ENCODE measurements at regions of chr4 and their contacts with region 1.

Region 1: DNA sequence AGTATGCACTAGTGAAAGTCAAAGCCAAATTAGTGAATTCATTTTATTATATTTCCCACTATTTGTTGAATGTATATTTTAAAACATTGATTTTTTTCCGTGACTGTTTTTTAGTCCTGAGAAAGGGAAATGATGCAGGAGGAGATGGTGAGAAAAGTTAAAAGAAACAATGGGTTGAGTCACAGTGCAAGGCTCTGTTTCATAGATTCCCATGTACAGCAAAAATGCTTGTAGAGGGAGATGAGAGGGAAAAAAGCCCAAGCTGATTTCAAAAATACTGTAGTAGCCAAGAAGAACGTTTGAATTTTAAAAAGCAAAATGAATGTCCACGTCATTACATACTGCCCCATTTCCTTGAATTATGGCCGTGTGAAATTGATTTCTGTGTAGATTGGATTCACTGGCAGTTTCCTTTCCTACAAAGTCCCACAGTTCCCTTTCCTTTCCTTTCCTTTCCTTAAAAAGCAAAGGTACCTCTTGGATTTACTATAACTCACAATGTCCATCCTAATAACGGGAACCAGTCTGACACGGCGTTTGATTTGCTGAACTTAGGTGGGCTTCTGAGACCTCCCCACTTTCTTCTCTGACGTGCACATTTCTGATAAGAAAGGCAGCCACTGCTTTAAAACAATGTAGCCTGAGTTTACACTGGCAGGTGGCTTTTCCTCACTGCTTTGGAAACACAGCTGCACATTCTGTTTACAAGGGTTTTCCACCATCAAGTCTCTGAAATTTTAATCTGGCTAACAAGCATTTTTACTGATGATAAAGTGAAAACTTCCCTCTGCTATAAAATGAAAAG is 63.7 kb downstream of the SPCS3 start:
- DNase-seq: no peak
- H3K4me3 ChIP-seq: peak overlapping the region; percentile 42
- H3K27ac ChIP-seq: peak overlapping the region; percentile 74
- H3K4me1 ChIP-seq: peaks cover 4% of the 10 kb centered on the region
- H3K27me3 ChIP-seq: no peaks in the 10 kb centered on the region
- CTCF ChIP-seq: no peak

Region 2: DNA sequence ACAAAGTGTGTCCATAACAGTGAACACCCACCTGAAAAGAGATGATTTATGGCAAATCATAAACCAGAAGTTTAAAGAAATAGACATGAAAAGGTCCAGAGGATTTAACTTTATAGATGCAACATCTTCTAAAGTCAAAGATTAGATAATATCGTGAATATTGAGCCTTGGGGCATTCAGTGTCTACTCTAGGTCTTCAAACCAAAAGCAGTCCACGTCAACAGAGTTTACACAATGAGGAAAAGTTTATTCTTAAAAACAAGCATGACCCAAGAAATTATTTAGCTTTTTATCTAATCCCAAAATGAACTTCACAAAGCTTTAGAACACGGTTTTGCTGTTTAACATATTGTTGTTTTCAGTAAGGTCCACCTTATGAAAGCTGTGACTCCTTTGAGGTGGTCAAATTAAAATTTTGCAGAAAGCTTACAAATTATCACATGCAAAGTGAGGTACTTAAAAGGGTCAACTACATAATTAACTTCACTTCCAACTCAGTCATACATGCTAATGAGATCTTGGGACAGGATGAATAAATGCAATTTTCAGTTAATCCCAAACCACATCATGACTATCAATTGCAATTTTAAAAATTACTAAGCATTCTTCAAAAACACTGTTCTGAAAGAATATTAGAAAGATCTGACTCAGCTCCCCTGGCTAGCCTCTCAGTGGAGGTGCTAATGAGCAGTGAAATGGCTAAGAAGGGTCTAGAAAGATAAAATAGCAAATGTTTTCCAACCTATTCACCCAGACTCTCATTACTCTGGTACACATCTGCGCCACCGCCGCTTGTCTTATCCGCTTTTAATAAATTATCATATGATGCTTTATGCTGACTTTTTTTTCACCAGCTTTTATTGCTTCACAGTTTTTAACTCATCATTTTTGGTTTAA is 410.2 kb before region 1 on chr4:
- intact Hi-C with region 1: no loop called
- DNase-seq: no peak
- H3K4me3 ChIP-seq: no peak overlapping the region
- H3K27ac ChIP-seq: no peak overlapping the region
- H3K4me1 ChIP-seq: no peaks in the 10 kb centered on the region
- H3K27me3 ChIP-seq: no peaks in the 10 kb centered on the region
- CTCF ChIP-seq: no peak

Region 3: DNA sequence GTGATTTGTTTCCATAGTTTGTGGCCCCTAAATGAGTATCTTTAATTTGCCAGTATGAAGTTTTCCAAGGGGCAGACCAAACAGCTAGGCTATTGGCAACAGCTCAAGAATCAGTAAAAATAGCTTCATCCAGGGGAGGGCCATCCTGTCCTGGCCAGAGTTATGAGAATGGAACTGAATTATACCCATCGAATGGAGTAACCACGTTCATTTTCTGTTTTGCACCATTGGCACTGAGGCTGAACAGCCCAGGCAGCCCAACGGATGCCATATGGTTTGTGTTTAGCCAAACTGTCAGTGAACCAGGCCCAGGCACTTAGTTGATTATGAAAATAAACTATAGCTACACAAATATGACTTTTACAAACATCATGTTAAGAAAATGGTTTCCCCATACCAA is 96.7 kb before region 1 on chr4:
- intact Hi-C with region 1: no loop called
- DNase-seq: no peak
- H3K4me3 ChIP-seq: no peak overlapping the region
- H3K27ac ChIP-seq: no peak overlapping the region
- H3K4me1 ChIP-seq: peaks cover 12% of the 10 kb centered on the region
- H3K27me3 ChIP-seq: no peaks in the 10 kb centered on the region
- CTCF ChIP-seq: no peak

Region 4: GRCh38 chr4:176789955-176790354 is 406.5 kb after region 1 on chr4:
- intact Hi-C with region 1: loop called (anchors 10 kb)
- DNase-seq: no peak
- H3K4me3 ChIP-seq: peak overlapping the region; percentile 85
- H3K27ac ChIP-seq: peak overlapping the region; percentile 86
- H3K4me1 ChIP-seq: peaks cover 21% of the 10 kb centered on the region
- H3K27me3 ChIP-seq: peaks cover 17% of the 10 kb centered on the region
- CTCF ChIP-seq: peak; percentile 74

Measured in left ventricle myocardium inferior (tissue), 1 donor.